ENCODE measurements at regions of chr15 and their contacts with region 1.

Region 1: DNA sequence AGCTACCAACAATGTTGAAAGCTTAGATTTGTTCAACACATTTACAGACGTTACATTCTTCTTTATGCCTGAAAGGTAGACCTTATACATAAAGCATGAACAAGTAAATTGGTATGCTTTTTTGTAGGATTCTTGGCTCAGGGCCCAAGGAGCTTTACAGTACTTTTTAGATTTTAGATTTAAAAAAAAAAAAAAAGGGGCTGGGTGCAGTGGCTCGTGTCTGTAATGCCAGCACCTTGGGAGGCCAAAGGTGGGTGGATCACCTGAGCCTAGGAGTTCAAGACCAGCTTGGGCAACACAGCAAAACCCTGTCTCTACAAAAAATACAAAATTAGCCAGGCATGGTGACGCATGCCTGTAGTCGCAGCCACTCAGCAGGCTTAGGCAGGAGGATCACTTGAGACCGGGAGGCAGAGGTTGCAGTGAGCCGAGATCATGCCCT is 39.7 kb downstream of the MEF2A start:
- DNase-seq: peak; percentile 84
- H3K4me3 Mint-ChIP-seq: peak overlapping the region; percentile 77
- H3K27ac Mint-ChIP-seq: peak overlapping the region; percentile 95
- H3K4me1 Mint-ChIP-seq: peaks cover 34% of the 10 kb centered on the region
- H3K27me3 Mint-ChIP-seq: no peaks in the 10 kb centered on the region
- CTCF ChIP-seq: no peak

Region 2: DNA sequence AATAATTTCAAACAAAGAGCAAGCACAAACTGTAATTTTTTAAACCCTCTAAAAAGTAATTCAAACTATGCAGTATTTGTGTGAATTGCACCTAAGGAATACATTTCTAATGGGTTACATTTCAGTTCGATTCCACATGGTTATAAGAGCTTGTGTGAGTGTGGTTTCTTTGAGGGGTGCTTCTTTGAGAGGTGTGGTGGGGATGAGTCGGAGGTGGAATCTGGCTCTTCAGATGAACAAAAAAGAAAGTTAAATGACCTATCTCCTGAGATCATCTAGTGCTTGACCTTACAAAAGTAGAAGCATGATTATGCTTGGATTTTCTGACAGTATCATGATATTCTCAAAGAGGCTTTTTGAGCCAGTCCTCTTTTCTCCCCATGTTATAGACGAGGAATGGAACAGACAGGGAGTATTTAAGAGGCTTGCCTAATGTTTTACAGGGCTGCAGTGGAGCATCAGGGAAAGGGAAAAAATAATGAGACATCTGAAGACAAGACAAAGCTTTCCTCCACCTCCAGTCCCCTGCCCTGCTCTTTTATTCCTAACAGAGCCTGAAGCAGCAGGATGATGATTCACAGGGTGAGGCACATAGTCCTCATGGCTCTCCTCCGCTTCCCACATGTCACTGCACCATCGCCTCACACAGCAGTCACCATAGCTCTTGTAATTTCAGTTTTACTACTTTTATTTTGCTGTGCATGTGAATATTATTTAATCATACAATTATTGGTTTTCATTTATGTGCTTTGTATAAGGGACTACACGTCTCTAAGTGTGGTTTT is 45.7 kb after region 1 on chr15:
- CTCF ChIA-PET with region 1: interaction called, 4 read pairs
- POLR2A ChIA-PET with region 1: interaction called, 10 read pairs
- intact Hi-C with region 1: loop called (anchors 5 kb)
- DNase-seq: peak; percentile 69
- H3K4me3 Mint-ChIP-seq: peak overlapping the region; percentile 21
- H3K27ac Mint-ChIP-seq: peak overlapping the region; percentile 93
- H3K4me1 Mint-ChIP-seq: peaks cover 10% of the 10 kb centered on the region
- H3K27me3 Mint-ChIP-seq: no peaks in the 10 kb centered on the region
- CTCF ChIP-seq: no peak